Mammary epithelial cell (primary cell): ENCODE measurements at regions of chr15 and their contacts with region 1.

Region 1: GRCh38 chr15:31200735-31201151 is 99.2 kb upstream of the TRPM1 start:
- DNase-seq: peak; percentile 36
- H3K4me3 ChIP-seq: no peak overlapping the region
- H3K27ac ChIP-seq: no peak overlapping the region
- H3K4me1 ChIP-seq: no peaks in the 10 kb centered on the region
- H3K27me3 ChIP-seq: no peaks in the 10 kb centered on the region
- CTCF ChIP-seq: peak; percentile 44 to 80

Region 2: DNA sequence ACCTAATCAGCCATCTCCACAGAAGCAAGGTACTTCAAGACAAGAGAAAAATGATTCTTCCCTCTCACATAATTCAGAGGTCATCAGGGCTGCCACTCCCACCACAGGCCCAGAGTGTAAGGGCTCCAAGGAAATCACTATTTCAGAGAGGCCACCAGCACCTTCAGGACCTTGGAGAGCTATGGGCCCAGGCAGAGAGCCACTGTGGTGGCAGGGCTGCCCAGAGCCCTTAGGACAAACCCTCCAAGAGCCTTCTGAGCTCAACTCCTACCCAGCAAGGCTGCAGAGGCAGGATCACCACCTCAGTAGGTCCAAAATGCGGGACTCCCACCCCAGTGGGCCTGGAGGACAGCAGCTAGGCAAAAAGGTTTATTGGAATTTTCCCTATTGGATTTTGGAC is 314.9 kb before region 1 on chr15:
- CTCF ChIA-PET with region 1: no interaction called
- dilution Hi-C with region 1: no loop called
- in situ Hi-C with region 1: no loop called
- intact Hi-C with region 1: loop called (anchors 5 kb)
- DNase-seq: no peak
- H3K4me3 ChIP-seq: no peak overlapping the region
- H3K27ac ChIP-seq: no peak overlapping the region
- H3K4me1 ChIP-seq: no peaks in the 10 kb centered on the region
- H3K27me3 ChIP-seq: no peaks in the 10 kb centered on the region
- CTCF ChIP-seq: no peak

Region 3: DNA sequence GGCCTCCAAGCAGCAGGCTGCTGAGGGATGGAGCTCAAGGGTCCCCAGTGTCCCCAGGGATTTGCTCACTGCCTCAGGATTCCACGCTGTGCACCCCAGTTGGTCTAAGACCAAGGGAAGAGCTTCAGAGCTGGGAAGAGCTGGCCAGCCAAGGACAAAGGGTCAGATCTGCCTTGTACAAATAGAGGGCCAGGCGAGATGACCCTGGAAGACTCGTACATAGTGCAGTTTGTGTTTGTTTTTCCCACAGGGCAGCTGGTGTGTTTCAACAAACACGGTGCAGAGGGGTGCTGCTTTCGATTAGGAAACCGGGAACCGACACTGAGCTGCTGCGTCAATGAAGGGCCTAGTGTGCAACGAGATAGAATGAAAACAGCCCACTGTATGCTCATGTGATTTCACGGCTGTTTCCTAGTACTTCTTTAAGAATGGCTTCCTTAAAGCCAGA is 43.1 kb before region 1 on chr15:
- CTCF ChIA-PET with region 1: no interaction called
- dilution Hi-C with region 1: no loop called
- in situ Hi-C with region 1: no loop called
- intact Hi-C with region 1: no loop called
- DNase-seq: no peak
- H3K4me3 ChIP-seq: no peak overlapping the region
- H3K27ac ChIP-seq: no peak overlapping the region
- H3K4me1 ChIP-seq: no peaks in the 10 kb centered on the region
- H3K27me3 ChIP-seq: no peaks in the 10 kb centered on the region
- CTCF ChIP-seq: no peak

Region 4: GRCh38 chr15:31265871-31266711 is 65.3 kb after region 1 on chr15:
- CTCF ChIA-PET with region 1: no interaction called
- dilution Hi-C with region 1: no loop called
- in situ Hi-C with region 1: loop called in 1 of 2 experiments (anchors 10 kb)
- intact Hi-C with region 1: no loop called
- DNase-seq: no peak
- H3K4me3 ChIP-seq: no peak overlapping the region
- H3K27ac ChIP-seq: no peak overlapping the region
- H3K4me1 ChIP-seq: peaks cover 14% of the 10 kb centered on the region
- H3K27me3 ChIP-seq: no peaks in the 10 kb centered on the region
- CTCF ChIP-seq: no peak

Region 5: DNA sequence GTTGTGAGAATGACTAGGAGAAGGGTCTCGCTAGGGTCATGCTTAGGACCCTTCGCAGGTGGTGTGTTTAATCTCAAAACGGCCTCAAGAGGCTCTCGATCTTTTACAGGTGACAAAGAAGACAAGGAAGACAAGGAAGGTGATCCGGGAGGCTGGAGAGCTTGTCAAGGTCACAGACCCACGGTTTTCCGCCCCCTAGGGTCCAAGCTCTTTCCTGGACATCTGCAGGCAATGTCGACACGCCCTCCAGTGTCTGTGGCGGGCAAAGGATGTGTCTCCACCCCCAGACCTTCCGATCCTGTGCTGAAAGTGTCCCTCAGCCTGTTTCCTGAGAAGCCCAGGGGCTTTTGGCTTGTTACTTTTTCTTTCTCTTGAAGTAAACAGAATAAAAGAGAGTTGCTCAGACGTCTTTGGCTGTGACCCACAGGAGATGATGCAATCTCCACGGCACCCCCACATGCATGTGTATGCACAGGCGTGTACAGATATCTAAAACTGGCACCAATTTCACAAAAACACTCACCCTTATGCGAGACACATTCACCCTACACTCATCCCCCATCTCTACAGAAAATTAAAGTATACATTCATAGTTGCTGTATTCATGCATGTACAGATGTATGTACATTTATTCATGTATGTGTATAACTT is 234.6 kb after region 1 on chr15:
- CTCF ChIA-PET with region 1: interaction called, 3 read pairs
- dilution Hi-C with region 1: no loop called
- in situ Hi-C with region 1: no loop called
- intact Hi-C with region 1: loop called (anchors 2 kb)
- DNase-seq: peak; percentile 28
- H3K4me3 ChIP-seq: no peak overlapping the region
- H3K27ac ChIP-seq: no peak overlapping the region
- H3K4me1 ChIP-seq: peaks cover 17% of the 10 kb centered on the region
- H3K27me3 ChIP-seq: no peaks in the 10 kb centered on the region
- CTCF ChIP-seq: peak; percentile 48 to 75